ENCODE measurements at regions of chr6 and their contacts with region 1.

Region 1: DNA sequence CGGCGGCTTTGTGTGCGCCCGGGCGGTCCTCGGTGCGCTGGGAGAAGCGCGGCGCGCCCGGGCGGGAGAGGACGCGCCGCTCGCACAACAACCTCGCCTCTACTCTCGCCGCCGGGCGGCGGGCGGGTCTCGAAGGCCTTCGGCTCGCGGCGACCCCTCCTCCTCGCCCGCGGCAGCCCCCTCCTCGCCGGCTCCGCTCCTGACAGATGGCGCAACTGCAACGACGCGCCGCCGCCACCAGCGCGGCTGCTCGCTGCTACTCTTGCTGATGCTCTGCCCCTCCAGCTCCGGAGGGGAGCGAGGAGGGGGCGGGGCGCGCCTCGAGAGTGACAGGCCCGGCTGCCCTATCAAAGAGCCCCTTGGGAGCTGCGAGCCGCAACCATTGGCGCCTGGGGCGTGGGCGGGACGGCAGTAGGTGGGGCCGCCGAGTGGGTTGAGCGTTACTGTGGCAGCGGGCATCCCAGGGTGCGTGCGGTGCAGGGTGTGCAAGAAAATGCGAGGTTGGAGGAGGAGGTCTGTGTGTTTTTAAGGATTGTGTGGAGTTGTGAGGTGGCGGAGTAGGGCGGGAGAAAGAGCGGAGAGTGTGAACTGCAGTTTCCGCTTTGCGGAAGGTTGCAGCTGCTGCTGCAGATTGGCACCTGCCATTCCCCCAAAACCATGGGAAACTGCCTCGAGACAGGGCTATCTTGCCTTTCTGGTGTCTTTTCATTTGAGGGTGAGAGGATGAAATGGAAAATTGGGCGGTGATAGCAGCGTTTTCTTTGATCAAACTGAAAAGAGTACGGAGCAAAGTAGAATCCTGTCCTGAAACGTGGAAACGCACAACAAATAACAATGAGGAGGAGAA is at the start of gene FYN:
- DNase-seq: peak; percentile 98 to 100 (median 99)

Region 2: GRCh38 chr6:111743862-111744692 is 129.3 kb before region 1 on chr6:
- intact Hi-C with region 1: loop called (anchors 10 kb)
- DNase-seq: peak in 27 of 42 donors; percentile 36 to 83 (median 62)

Region 3: GRCh38 chr6:111793711-111794111 is 79.7 kb before region 1 on chr6:
- intact Hi-C with region 1: no loop called
- DNase-seq: peak in 1 of 42 donors; percentile 26

Region 4: DNA sequence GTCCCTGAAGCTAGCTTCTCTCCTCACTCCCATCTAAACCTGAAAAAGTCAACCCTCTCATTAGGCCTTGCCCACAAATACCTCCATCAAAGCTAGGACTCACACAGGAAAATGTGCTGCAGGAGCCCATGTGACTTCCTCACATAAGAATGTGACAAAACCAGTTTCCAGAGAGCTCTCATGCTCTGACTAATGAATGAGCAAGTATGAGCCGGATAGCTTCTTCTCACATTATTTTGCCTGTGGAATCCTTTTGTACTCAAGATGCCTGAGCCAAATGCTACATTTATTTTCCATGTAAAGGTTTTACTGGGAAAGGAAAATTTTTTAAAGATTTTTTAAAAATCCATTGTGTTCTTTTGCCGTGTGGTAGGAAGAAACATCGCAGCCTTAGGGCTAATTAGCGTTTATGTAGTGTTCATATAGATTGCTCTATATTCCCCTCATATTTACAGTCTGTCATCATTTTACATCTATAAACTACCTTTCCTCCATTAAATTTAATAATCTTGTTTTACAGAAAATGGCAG is 111.9 kb after region 1 on chr6:
- intact Hi-C with region 1: loop called (anchors 10 kb)
- DNase-seq: no peak